Activated CD8-positive, alpha-beta T cell treated with anti-CD3 and anti-CD28 coated beads, Interleukin-2, amount 10 ng/mL, durations not matched to agents 7 days and 5 days (primary cell): ENCODE measurements at regions of chr12 and their contacts with region 1.

Region 1: DNA sequence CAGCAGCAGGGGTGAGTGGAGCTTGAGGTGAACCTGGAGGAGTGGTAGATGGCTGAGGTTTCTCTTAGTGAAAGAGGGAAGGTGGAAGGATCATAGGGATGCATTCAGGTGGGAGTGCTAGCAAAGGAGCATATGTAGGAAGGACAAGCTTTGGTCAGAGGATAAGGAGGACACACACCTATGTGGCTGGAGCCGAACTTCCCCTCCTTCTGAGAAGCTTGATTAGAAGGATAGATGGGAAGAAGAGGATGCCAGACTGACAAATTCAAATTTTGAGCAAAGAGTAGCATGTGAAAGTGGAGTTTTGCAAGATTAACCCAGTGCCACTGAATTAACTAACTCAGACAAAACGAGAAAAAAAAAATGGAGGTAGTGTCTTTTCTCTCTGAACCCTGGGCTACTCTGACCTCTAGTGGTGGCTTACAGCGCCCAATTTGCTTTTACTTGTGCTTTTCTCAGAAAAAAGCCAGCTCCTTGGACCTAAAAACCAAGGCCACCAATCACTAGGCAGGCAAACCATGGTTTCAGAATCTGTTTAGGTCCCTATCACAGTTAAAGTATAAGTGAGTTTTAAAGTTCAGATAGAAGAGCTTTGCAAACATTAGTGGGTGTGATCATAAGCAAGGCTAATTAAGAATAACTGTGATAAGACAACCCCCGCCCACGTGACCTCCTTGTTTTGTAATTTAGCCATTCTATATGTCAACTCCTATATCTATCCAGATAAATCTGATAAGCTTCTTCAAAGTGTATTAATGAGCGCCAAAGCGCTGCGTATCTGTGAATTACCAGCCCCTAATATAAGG is 15.5 kb downstream of the EMP1 start:
- DNase-seq: peak; percentile 84
- ATAC-seq: peak; percentile 62
- H3K4me3 Mint-ChIP-seq: no peak overlapping the region
- H3K27ac Mint-ChIP-seq: peak overlapping the region; percentile 65
- H3K4me1 Mint-ChIP-seq: peaks cover 44% of the 10 kb centered on the region
- H3K27me3 Mint-ChIP-seq: no peaks in the 10 kb centered on the region

Region 2: GRCh38 chr12:12786716-12787601 is 425.1 kb before region 1 on chr12:
- CTCF ChIA-PET with region 1: interaction called, 11 read pairs
- POLR2A ChIA-PET with region 1: no interaction called
- DNase-seq: peak; percentile 72
- ATAC-seq: peak; percentile 94
- H3K4me3 Mint-ChIP-seq: peak overlapping the region; percentile 80
- H3K27ac Mint-ChIP-seq: peak overlapping the region; percentile 87
- H3K4me1 Mint-ChIP-seq: peaks cover 43% of the 10 kb centered on the region
- H3K27me3 Mint-ChIP-seq: no peaks in the 10 kb centered on the region

Region 3: DNA sequence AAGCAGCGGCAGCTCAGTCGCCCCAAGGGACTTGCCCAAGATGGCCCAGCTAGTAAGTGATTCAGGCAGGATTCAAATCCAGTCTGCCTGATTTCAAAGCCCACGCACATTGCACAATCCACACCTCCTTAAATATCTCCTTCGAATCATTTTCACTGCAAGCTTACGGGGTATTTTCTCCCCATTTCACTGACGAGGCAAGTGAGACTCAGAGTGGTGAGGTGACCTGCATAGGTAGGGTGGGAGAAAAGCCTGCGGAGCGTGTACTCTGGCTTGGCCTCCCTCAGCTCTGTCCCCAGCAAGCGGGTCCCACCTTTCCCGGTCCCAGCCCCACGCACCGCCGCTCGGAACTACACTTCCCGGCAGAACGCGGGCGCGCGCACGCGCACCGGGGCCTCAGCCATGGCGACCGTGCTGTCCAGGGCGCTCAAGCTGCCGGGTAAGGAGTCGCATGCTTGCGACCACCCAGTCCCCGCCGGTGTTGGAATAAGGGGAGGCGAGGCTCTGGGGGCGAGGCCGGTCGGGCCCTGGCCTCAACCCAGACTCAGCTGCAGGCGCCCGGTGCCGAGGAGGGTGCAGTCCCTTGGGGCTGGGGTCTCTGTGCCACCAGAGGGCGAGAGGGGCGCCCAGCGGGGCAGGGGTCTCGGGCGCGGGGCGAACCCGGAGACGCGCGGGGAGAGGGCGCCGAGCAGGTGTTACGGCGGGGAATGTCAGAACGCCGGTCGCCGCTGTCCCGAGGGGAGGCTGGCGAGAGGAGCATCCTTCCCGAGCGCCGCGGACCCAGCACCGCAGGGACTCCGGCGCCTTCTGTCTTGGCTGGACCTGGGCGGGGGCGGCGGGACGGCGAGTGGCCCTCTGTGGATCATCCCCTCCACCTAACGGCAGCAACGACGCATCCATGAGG is 167.8 kb before region 1 on chr12 and contains the start of gene FAM234B:
- CTCF ChIA-PET with region 1: interaction called, 36 read pairs
- POLR2A ChIA-PET with region 1: no interaction called
- DNase-seq: peak; percentile 75
- ATAC-seq: peak; percentile 99
- H3K4me3 Mint-ChIP-seq: peak within 1 kb of the TSS; percentile 78
- H3K27ac Mint-ChIP-seq: peak within 1 kb of the TSS; percentile 48
- H3K4me1 Mint-ChIP-seq: peaks cover 13% of the 10 kb centered on the region
- H3K27me3 Mint-ChIP-seq: peaks cover 20% of the 10 kb centered on the region
- total RNA-seq, gene FAM234B: 4.2 to 4.3 TPM

Region 4: DNA sequence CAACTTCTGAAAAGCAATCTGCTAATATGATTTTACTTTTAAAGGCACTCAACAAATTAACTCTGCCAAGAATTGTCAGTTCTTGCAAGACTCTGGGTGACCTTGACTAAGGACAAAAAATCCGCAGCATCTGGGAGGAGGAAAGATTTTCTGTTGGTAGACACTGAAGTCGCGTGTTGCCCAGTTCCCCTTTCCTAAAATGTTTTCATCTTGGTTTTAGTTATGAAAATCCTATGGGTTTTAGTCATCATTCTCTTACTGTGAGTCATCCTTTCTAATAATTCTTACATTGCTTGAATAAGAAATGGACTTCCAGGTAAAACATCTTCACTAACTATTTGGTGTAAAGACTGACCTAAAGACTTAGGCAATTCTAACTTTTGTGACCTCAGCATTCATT is 117.7 kb before region 1 on chr12:
- CTCF ChIA-PET with region 1: interaction called, 204 read pairs
- POLR2A ChIA-PET with region 1: interaction called, 9 read pairs
- DNase-seq: no peak
- ATAC-seq: no peak
- H3K4me3 Mint-ChIP-seq: no peak overlapping the region
- H3K27ac Mint-ChIP-seq: no peak overlapping the region
- H3K4me1 Mint-ChIP-seq: peaks cover 20% of the 10 kb centered on the region
- H3K27me3 Mint-ChIP-seq: peaks cover 6% of the 10 kb centered on the region

Region 5: GRCh38 chr12:13179211-13180074 is 32.6 kb before region 1 on chr12:
- CTCF ChIA-PET with region 1: interaction called, 15 read pairs
- POLR2A ChIA-PET with region 1: no interaction called
- DNase-seq: peak; percentile 73
- ATAC-seq: peak; percentile 93
- H3K4me3 Mint-ChIP-seq: peak overlapping the region; percentile 71
- H3K27ac Mint-ChIP-seq: peak overlapping the region; percentile 87
- H3K4me1 Mint-ChIP-seq: peaks cover 63% of the 10 kb centered on the region
- H3K27me3 Mint-ChIP-seq: peaks cover 30% of the 10 kb centered on the region

Region 6: DNA sequence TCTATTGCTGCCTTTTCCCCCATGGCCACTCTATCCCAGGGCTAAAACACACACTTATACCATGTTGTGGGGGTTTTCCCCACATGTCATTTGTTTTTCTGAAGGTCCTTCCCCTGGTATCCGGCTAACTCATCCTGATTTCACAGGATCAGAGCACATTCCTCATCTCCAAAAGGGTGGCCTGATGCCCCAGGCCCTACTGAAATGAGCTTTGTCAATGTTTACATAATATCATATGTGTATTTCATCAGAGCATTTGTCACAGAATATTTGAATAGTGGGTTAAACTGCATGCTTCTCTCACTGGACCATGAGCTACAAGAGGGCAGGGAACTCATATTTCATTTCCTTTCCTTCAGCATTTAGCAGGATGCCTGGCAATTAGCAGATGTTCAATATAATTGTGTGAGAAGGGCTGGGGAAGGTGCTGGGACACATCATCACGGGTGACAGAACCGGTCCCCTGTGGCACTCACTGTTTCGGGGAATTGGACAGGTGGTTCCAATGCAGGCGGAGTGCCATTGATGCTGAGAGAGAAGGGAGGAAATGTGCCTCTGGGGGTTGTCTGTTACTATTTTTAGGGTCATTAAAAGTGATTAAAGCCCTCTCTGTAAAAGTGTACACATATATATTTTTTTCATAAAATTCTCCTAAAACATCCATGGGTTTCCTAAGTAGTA is 11.3 kb after region 1 on chr12:
- CTCF ChIA-PET with region 1: interaction called, 34 read pairs
- POLR2A ChIA-PET with region 1: interaction called, 3 read pairs
- DNase-seq: no peak
- ATAC-seq: no peak
- H3K4me3 Mint-ChIP-seq: no peak overlapping the region
- H3K27ac Mint-ChIP-seq: no peak overlapping the region
- H3K4me1 Mint-ChIP-seq: no peaks in the 10 kb centered on the region
- H3K27me3 Mint-ChIP-seq: peaks cover 44% of the 10 kb centered on the region